ENCODE measurements at regions of chr4 and their contacts with region 1.

Region 1: DNA sequence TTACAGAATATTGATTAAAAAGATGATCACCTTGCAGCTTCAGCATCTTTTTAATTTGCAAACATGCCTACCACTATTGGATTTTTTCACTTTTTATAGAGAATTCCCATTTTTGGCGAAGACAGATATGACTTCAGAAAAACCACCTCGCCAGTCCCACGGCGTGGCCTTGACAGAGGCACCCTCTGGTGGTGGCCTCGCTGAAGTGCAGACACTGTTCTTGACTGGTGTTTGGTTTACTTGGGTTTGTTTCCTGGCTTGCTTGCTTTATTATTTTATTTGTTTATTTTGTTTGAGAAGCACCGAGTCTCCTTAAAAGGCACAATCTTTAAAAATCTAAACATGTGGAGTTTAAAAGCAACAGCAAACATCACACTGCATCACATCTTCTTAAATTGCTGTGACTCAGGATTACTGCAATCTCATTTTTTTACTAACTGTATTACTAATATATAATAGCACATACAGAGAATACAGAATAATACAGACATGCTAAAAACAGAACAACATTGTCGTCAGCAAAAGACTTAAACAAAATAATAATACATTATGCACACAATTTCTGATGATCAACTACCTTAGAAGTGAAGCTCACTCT is 13.1 kb upstream of the AMTN start:
- DNase-seq: peak; percentile 64
- H3K4me3 Mint-ChIP-seq: no peak overlapping the region
- H3K27ac Mint-ChIP-seq: no peak overlapping the region
- H3K4me1 Mint-ChIP-seq: no peaks in the 10 kb centered on the region
- H3K27me3 Mint-ChIP-seq: no peaks in the 10 kb centered on the region

Region 2: DNA sequence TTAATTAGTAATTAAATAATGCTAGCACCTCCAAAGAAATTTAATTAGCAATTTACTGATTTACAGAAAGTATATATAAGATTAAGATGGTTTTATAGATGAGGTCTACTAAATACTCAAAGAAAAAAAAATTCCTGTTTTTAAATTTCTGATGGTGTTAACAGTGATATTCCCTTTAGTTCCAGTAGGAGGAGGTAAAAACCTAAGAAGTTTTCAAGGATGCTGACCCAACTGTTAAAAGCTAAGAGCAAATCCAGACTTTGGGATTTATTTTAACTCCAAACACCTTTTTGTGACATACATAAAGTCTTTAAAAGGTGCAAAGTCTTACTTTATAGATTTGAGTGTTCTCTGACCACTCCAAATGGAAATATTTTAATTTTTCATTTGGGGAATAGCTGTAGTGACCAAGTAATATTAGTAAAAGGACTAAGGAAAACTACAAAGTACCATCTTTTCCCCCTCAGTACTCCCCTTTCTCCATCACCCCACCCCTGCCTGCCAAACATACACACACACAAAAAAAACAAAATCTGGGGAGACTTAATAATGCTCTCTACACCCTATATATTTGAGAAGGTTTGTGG is 608.6 kb before region 1 on chr4:
- CTCF ChIA-PET with region 1: no interaction called
- intact Hi-C with region 1: loop called (anchors 2 kb)
- DNase-seq: no peak
- H3K4me3 Mint-ChIP-seq: no peak overlapping the region
- H3K27ac Mint-ChIP-seq: no peak overlapping the region
- H3K4me1 Mint-ChIP-seq: no peaks in the 10 kb centered on the region
- H3K27me3 Mint-ChIP-seq: peaks cover 22% of the 10 kb centered on the region

Region 3: DNA sequence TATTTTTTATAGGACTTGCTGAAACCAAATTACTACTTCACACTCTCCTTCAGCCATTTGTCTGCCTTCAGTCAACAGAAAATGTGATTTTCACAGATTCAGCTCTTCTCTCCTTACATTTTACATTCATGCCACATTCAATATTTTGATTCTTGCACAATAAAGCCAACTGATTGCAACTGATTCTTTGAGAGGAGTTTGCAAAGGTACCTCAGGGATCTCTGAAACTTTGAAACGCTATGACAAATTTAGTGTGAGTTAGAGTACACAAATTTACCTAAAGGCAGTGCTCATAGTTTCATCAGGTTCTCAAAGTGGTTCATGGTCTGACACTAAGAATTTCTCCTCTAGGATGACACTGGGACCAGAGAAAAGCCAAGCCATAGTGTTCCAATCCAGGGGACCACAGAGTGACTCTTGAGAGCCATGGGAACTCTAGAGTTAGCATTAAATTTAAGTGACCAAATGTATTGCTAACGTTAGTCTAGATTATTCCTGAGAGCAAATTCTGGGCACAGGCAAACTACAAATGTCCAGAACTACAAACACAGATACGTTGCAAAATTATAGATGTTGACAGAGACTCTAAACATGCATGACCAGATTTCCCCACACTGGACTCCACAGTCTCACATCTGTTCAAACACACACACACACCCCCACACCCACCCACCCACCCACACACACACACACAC is 253.9 kb before region 1 on chr4:
- CTCF ChIA-PET with region 1: no interaction called
- intact Hi-C with region 1: loop called (anchors 10 kb)
- DNase-seq: no peak
- H3K4me3 Mint-ChIP-seq: no peak overlapping the region
- H3K27ac Mint-ChIP-seq: no peak overlapping the region
- H3K4me1 Mint-ChIP-seq: no peaks in the 10 kb centered on the region
- H3K27me3 Mint-ChIP-seq: no peaks in the 10 kb centered on the region

Region 4: GRCh38 chr4:70365479-70365878 is 139.8 kb before region 1 on chr4:
- CTCF ChIA-PET with region 1: no interaction called
- intact Hi-C with region 1: no loop called
- DNase-seq: no peak
- H3K4me3 Mint-ChIP-seq: no peak overlapping the region
- H3K27ac Mint-ChIP-seq: no peak overlapping the region
- H3K4me1 Mint-ChIP-seq: no peaks in the 10 kb centered on the region
- H3K27me3 Mint-ChIP-seq: no peaks in the 10 kb centered on the region

Region 5: DNA sequence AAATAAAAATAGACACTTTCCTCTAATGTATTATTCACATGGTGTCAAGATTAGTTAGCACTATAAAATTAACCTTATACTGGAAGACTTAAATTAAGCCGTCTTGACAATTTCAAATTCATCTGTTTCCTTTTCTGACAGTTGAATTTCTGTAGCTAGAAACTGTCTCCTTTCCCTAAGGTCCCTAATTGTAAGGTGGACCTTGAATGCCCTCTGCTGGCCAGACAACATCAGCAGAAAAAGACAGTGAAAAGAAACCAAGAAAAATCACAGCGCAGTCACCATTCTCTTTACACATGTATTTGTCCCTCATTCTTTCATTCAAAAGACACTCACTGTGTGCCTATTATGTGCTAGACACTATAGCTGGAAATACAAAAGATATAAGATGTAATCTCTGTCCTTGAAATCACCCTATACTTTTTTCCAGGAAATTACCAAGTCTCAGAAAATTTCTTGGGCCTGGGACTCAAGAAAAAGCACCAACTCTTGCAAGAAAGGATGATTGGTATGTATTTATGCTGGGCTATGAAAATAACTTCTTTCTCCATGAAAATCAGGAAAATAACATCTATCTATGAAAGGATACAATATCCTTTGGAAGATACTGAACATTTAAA is 54.1 kb after region 1 on chr4:
- CTCF ChIA-PET with region 1: interaction called, 3 read pairs
- intact Hi-C with region 1: loop called (anchors 1 kb)
- DNase-seq: peak; percentile 73
- H3K4me3 Mint-ChIP-seq: no peak overlapping the region
- H3K27ac Mint-ChIP-seq: no peak overlapping the region
- H3K4me1 Mint-ChIP-seq: peaks cover 9% of the 10 kb centered on the region
- H3K27me3 Mint-ChIP-seq: no peaks in the 10 kb centered on the region